Transverse colon (tissue), 4 donors: ENCODE measurements at regions of chr5 and their contacts with region 1.

Region 1: GRCh38 chr5:79474367-79475151 is 39.4 kb downstream of the HOMER1 start:
- DNase-seq: no peak
- H3K4me3 ChIP-seq: no peak overlapping the region
- H3K27ac ChIP-seq: no peak overlapping the region
- H3K4me1 ChIP-seq: no peaks in the 10 kb centered on the region
- H3K27me3 ChIP-seq: no peaks in the 10 kb centered on the region
- CTCF ChIP-seq: no peak
- EP300 ChIP-seq: no peak
- POLR2A ChIP-seq: no peak

Region 2: GRCh38 chr5:79149432-79149831 is 325.1 kb before region 1 on chr5:
- in situ Hi-C with region 1: loop called in 3 of 4 experiments (anchors 25 kb)
- intact Hi-C with region 1: loop called (anchors 5 kb)
- DNase-seq: no peak
- H3K4me3 ChIP-seq: no peak overlapping the region
- H3K27ac ChIP-seq: no peak overlapping the region
- H3K4me1 ChIP-seq: no peaks in the 10 kb centered on the region
- H3K27me3 ChIP-seq: no peaks in the 10 kb centered on the region
- CTCF ChIP-seq: no peak
- EP300 ChIP-seq: no peak
- POLR2A ChIP-seq: no peak